Activated CD4-positive, alpha-beta T cell treated with anti-CD3 and anti-CD28 coated beads for 36 hours (primary cell): ENCODE measurements at regions of chr3 and their contacts with region 1.

Region 1: DNA sequence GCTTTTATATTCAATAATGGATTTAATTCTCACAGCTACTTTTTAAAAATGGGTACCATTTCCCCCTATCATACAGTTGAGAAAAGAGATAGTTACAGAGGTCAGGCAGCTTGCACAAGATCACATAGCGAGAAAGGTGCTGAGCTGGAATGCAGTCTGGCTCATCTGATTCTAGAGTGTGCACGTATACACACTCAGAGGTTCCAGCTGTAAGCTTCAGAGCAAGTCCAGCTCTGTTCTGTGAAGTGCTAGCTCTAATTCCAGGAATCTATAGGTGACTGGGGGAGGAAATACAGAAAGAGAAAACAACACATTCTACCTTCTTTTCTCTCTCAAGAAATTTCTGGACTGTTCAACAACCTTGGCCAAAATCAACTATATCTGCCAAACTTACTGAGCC is 318.7 kb downstream of the FOXP1 start:
- DNase-seq: peak; percentile 34
- ATAC-seq: peak; percentile 78
- H3K4me3 Mint-ChIP-seq: no peak overlapping the region
- H3K27ac Mint-ChIP-seq: peak overlapping the region; percentile 90
- H3K4me1 Mint-ChIP-seq: peaks cover 73% of the 10 kb centered on the region
- H3K27me3 Mint-ChIP-seq: no peaks in the 10 kb centered on the region

Region 2: DNA sequence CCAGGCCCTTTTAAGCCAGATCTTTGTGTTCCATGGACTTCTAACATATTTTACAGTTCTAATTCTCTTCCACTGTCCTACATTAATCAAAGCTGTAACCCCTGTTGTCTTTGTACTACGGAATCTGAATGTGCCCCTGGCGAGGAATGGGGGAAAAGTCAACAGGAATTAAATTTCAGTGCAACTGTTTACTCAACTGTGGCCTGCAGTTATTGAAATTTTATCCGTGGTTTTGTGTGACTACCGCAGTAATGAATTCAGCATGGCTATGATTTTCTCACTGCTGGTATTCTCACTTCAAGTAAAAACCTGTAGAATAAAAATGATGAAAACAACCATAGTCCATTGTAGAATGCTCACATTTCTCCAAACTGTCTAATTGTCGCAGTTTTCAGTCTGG is 69.3 kb before region 1 on chr3:
- CTCF ChIA-PET with region 1: no interaction called
- POLR2A ChIA-PET with region 1: no interaction called
- intact Hi-C with region 1: no loop called
- DNase-seq: no peak
- ATAC-seq: no peak
- H3K4me3 Mint-ChIP-seq: no peak overlapping the region
- H3K27ac Mint-ChIP-seq: peak overlapping the region; percentile 56
- H3K4me1 Mint-ChIP-seq: peaks cover 69% of the 10 kb centered on the region
- H3K27me3 Mint-ChIP-seq: no peaks in the 10 kb centered on the region

Region 3: DNA sequence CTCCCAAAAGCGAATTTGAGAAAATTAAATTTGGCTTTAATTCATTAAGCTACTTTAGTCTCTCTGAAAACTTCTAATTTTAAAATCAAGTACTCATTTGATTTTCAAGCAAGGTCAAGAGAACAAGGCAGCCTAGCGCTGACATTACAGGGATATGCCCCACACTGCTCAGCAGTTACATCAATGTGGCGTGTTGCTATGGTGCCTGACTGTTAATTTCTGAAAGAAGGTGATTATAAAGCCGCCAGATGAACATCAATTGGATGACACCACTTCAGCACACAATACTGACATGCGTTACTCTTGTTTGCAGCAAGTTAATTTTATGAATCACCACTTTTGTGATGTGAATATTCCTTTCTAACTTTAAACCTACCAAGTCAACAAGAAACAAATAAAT is 34.3 kb after region 1 on chr3:
- CTCF ChIA-PET with region 1: interaction called, 6 read pairs
- POLR2A ChIA-PET with region 1: no interaction called
- intact Hi-C with region 1: loop called in 1 of 2 experiments (anchors 2 kb)
- DNase-seq: peak; percentile 73
- ATAC-seq: peak; percentile 68
- H3K4me3 Mint-ChIP-seq: peak overlapping the region; percentile 80
- H3K27ac Mint-ChIP-seq: peak overlapping the region; percentile 96
- H3K4me1 Mint-ChIP-seq: peaks cover 94% of the 10 kb centered on the region
- H3K27me3 Mint-ChIP-seq: no peaks in the 10 kb centered on the region